ENCODE measurements at regions of chr1 and their contacts with region 1.

Region 1: DNA sequence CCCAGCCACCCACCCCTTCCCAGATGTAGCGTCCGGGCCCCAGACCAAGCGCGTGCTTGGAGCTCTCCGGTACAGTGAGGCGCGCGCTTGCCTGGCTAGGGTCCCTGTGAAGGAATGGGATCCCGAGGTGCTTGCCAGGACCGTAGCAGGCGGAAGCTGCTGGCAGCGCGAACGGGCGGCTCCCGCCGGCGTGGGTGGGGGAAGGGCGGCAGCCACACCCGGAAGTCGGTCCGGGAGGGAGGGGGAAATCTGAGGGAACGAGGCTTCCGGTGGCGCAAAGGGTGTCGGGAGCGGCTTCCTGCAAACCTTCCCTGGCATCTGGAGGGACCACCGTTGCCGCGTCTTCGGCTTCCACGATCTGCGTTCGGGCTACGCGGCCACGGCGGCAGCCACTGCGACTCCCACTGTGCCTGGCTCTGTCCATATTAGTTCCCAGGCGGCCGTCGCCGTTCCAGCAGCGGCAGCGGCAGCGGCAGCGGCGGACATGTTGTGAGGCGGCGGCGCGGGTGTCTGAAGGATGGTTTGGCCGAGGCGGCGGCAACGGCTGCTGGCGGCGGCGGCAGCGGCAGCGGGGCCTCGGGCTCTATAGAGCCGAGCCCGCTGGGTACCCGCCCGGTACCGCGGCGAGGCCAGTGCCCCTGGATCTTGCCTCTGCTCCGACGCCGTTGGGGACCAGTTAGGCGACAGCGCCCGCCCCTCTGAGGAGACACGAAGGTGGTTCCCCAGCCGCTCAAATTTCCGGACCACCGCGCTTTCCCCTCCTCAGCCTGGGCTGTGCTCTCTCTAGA is at the start of gene DR1:
- DNase-seq: peak; percentile 95
- H3K4me3 Mint-ChIP-seq: peak within 1 kb of the TSS; percentile 83
- H3K27ac Mint-ChIP-seq: peak within 1 kb of the TSS; percentile 96
- H3K4me1 Mint-ChIP-seq: peaks cover 25% of the 10 kb centered on the region
- H3K27me3 Mint-ChIP-seq: no peaks in the 10 kb centered on the region
- total RNA-seq, gene DR1: 76.3 to 80.3 TPM

Region 2: DNA sequence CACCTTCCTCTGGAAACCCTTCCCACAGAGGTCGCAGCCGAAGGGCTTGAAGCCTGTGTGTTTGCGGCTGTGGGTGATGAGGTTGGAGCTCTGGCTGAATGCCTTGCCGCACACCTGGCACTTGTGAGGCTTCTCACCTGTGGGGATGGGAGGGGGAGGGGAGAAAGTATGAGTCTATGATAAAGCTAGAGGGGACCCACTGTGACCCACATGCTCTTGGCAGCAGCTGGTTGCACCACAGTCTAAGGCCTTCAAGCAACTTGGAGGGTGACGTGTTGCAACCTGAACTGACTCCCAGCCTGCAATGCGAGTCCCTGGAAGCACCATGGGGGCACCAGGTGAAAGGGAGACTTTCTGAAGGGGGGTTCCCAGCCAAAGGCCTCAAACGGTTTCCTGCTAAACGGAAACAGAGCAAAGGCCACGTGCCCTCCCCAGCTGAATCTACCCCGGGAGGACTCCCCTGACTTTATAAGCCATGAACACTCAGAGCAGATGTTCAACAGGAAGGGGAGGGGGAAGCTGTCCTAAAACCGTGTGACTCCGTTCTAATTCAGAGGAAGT is 869.7 kb before region 1 on chr1:
- CTCF ChIA-PET with region 1: no interaction called
- intact Hi-C with region 1: loop called (anchors 5 kb)
- DNase-seq: peak; percentile 94
- H3K4me3 Mint-ChIP-seq: peak overlapping the region; percentile 53
- H3K27ac Mint-ChIP-seq: peak overlapping the region; percentile 87
- H3K4me1 Mint-ChIP-seq: peaks cover 85% of the 10 kb centered on the region
- H3K27me3 Mint-ChIP-seq: no peaks in the 10 kb centered on the region

Region 3: GRCh38 chr1:92980732-92981647 is 364.8 kb before region 1 on chr1:
- CTCF ChIA-PET with region 1: no interaction called
- intact Hi-C with region 1: loop called (anchors 5 kb)
- DNase-seq: peak; percentile 55
- H3K4me3 Mint-ChIP-seq: peak overlapping the region; percentile 70
- H3K27ac Mint-ChIP-seq: peak overlapping the region; percentile 98
- H3K4me1 Mint-ChIP-seq: peaks cover 60% of the 10 kb centered on the region
- H3K27me3 Mint-ChIP-seq: no peaks in the 10 kb centered on the region

Region 4: DNA sequence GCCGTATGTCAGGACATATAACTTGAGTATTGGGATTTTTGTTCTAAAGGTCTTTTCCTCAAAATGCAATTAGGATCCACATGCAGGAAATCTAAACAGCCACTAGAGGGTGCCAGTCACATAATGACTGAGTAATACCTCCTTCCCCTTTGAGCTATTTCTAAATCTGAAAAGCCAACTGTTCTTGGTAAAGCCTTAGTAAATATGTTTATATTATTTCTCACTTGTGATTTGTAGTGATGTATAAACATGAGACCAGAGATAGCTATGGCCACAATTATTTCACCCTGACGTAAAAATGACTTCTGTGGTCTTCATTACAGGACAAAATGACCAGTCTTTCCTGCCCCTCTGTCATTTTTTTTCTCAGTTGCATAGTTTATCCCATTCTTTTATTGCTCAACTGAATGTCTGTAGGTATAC is 41.1 kb before region 1 on chr1:
- CTCF ChIA-PET with region 1: interaction called, 14 read pairs
- intact Hi-C with region 1: loop called (anchors 2 kb)
- DNase-seq: peak; percentile 67
- H3K4me3 Mint-ChIP-seq: no peak overlapping the region
- H3K27ac Mint-ChIP-seq: no peak overlapping the region
- H3K4me1 Mint-ChIP-seq: no peaks in the 10 kb centered on the region
- H3K27me3 Mint-ChIP-seq: no peaks in the 10 kb centered on the region

Region 5: GRCh38 chr1:93330617-93331016 is 15.2 kb before region 1 on chr1:
- CTCF ChIA-PET with region 1: no interaction called
- intact Hi-C with region 1: no loop called
- DNase-seq: no peak
- H3K4me3 Mint-ChIP-seq: no peak overlapping the region
- H3K27ac Mint-ChIP-seq: no peak overlapping the region
- H3K4me1 Mint-ChIP-seq: no peaks in the 10 kb centered on the region
- H3K27me3 Mint-ChIP-seq: no peaks in the 10 kb centered on the region

Region 6: GRCh38 chr1:93692983-93693591 is 347.3 kb after region 1 on chr1:
- CTCF ChIA-PET with region 1: no interaction called
- intact Hi-C with region 1: loop called (anchors 2 kb)
- DNase-seq: peak; percentile 77
- H3K4me3 Mint-ChIP-seq: no peak overlapping the region
- H3K27ac Mint-ChIP-seq: peak overlapping the region; percentile 57
- H3K4me1 Mint-ChIP-seq: peaks cover 15% of the 10 kb centered on the region
- H3K27me3 Mint-ChIP-seq: peaks cover 11% of the 10 kb centered on the region

Region 7: GRCh38 chr1:94383966-94384408 is 1038.2 kb after region 1 on chr1:
- CTCF ChIA-PET with region 1: no interaction called
- intact Hi-C with region 1: loop called (anchors 2 kb)
- DNase-seq: peak; percentile 48
- H3K4me3 Mint-ChIP-seq: peak overlapping the region; percentile 5
- H3K27ac Mint-ChIP-seq: peak overlapping the region; percentile 85
- H3K4me1 Mint-ChIP-seq: peaks cover 32% of the 10 kb centered on the region
- H3K27me3 Mint-ChIP-seq: peaks cover 4% of the 10 kb centered on the region